OCI-LY7 (cell line): ENCODE measurements at regions of chr19 and their contacts with region 1.

Region 1: DNA sequence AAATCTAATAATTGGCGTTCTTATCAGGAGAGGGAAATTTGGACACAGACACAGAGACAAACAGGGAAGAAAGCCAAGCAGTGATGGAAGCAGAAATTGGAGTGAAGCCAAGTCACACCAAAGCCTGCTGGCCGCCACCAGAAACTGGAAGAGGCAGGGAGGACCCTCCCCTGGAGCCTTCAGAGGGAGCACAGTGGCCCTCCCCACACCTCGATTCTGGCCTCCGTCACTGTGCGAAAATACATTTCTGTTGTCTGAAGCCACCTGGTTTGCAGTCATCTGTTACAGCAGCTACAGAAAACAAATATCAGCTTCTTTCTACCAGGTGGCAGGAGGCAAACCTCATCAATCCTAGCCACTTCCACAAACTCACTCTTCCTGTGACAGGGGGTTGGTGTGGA is 8.3 kb upstream of the TLE6 start:
- DNase-seq: peak; percentile 94
- H3K4me3 ChIP-seq: peak overlapping the region; percentile 35
- H3K27ac ChIP-seq: peak overlapping the region; percentile 98
- H3K4me1 ChIP-seq: peaks cover 67% of the 10 kb centered on the region
- CTCF ChIP-seq: 0 out of 2 replicates have a peak, but pooled peaks have one; percentile 23

Region 2: DNA sequence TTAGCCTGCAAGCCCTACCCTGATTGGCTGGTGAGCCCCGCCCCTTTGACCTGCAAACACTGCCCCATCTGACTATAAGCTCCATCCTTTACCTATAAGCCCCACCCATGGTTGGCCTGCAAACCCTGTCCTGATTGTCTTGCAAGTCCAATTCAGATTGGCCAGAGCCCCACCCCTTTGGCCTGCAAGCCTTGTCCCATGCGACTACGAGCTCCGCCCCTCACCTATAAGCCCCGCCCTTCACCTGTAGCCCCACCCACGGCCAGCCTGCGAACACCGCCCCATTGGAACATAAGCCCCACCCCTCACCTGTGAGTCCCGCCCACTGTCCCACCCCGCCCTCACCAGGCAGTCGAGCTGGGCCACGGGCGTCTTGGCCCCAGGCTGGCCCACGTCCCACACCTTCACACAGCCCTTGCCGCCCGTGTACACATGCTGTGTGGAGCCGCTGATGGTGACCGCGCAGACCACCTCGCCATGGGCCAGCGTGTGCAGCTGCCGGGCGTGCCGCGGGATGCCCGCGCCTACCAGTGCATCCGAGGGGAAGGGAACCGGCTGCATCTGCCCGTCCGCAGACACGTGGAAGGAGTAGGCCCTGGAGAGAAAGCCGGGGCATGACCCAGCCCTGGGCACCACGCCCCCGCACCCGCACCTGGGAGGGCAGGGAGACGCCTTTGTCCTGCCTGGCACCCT is 37.1 kb after region 1 on chr19:
- CTCF ChIA-PET with region 1: no interaction called
- POLR2A ChIA-PET with region 1: no interaction called
- intact Hi-C with region 1: no loop called
- DNase-seq: peak; percentile 48
- H3K4me3 ChIP-seq: no peak overlapping the region
- H3K27ac ChIP-seq: no peak overlapping the region
- H3K4me1 ChIP-seq: peaks cover 6% of the 10 kb centered on the region
- CTCF ChIP-seq: no peak

Region 3: DNA sequence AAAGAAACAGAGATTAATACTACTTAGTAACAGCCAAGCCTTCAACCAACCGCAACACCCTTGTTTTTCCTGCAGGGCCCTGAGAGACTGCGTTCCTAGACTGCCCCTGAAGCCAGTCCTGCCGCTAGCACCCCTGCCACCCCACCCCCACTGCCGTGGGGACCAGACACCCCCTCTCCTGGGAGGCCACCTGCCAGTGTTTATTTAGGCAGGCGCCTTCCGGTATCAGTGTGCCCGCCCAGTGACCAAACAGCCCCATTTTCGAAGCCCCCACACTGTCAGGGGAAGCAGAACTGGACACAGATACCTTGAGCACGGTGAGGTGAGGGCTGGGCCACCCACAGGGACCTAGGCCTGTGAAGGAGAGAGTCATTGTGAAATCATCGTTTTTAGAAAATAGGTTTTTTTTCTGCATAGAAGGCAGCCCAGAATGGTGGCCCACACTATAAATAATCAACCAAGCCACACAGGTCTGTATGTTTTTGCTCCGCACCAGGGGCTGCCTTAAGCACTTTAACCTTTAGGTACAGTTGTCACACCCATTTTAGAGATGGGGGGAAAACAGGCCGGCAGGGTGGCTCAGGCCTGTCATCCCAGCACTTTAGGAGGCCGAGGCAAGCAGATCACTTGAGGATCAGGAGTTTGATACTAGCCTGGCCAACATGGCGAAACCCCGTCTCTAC is 96.7 kb after region 1 on chr19:
- CTCF ChIA-PET with region 1: no interaction called
- POLR2A ChIA-PET with region 1: interaction called, 5 read pairs
- intact Hi-C with region 1: loop called (anchors 1 kb)
- DNase-seq: peak; percentile 91
- H3K4me3 ChIP-seq: peak overlapping the region; percentile 27
- H3K27ac ChIP-seq: peak overlapping the region; percentile 92
- H3K4me1 ChIP-seq: peaks cover 65% of the 10 kb centered on the region
- CTCF ChIP-seq: no peak